ENCODE measurements at regions of chr4 and their contacts with region 1.

Region 1: DNA sequence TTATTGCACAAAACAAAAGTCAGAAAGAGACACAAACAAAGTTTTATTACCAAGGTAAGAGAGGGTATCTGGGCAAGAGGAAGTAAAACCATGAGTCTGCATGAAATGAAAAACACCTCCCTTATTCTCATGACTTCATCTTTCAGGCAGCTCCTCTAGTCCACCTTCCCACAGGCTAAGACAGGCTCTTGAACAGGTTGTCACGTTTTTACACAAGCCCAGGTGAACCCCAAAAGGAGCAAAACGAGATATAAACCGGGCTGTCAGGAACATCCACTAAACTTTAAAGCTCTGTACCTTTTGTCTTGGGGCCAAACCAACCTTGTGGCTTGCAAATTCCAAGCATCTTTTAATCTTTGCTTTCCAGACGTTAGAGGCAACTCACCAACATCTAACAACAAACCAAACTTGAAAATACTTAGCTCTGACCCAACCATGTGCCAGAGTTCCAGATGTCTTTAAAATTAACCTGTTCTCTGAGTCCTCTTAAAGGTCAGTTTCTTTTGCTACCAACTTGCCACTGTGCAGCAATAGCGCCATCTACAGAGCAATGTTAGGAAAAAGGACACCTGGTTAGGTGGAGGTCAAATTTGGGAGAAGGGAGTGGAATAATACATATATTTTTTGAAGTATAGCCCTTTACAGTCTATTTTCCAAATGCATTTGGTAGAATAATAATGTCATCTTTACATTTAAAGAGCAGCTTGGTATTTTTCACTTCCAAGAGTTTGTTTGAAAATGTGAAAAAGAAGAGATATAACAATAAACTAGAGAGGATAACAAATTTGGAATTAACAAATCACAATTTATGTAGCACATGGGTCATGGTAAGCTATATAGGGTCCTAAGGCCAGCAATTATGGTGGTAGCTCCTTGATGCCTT is 73.1 kb downstream of the QRFPR start:
- DNase-seq: peak in 1 of 2 experiments; percentile 31
- H3K4me3 ChIP-seq: no peak overlapping the region
- H3K27ac ChIP-seq: peak overlapping the region; percentile 15; the same call in 1 of the 2 replicates
- H3K4me1 ChIP-seq: peaks cover 14% of the 10 kb centered on the region; the same call in 1 of the 2 replicates
- H3K27me3 ChIP-seq: no peaks in the 10 kb centered on the region
- CTCF ChIP-seq: peak; percentile 92

Region 2: DNA sequence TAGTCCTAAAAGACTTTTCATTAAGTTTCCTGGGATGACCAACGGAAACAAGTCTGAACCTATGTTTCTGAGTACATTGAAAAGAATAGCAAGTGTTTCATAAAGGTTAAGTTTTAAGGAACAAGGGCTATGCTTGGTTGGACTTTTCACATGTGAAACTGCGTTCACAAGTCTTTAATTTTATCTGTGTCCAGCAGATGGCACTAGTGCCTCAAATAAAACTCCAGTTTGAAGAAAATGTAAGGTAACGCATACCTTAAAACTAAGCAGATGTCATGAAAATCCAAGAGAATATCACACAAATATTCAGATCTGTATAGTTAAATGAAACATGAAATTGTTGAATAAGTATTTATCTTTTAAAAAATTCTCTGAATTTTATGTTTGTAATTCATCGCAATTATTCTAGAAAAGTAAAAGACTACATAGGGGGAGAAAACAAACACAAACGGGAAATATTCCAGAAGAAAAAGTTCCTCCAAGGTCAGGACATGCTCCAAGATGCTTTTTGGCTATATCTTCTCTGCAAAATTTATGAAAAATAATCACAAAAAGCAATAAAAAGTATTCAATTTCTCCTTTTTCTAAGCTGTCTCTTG is 1151.5 kb before region 1 on chr4:
- CTCF ChIA-PET with region 1: no interaction called
- POLR2A ChIA-PET with region 1: no interaction called
- intact Hi-C with region 1: loop called (anchors 5 kb)
- DNase-seq: peak; percentile 12 to 41
- H3K4me3 ChIP-seq: no peak overlapping the region
- H3K27ac ChIP-seq: no peak overlapping the region
- H3K4me1 ChIP-seq: no peaks in the 10 kb centered on the region
- H3K27me3 ChIP-seq: no peaks in the 10 kb centered on the region
- CTCF ChIP-seq: peak; percentile 87

Region 3: GRCh38 chr4:121252224-121252806 is 55.4 kb before region 1 on chr4:
- CTCF ChIA-PET with region 1: no interaction called
- POLR2A ChIA-PET with region 1: no interaction called
- intact Hi-C with region 1: loop called (anchors 1 kb)
- DNase-seq: peak; percentile 48 to 51
- H3K4me3 ChIP-seq: no peak overlapping the region
- H3K27ac ChIP-seq: no peak overlapping the region
- H3K4me1 ChIP-seq: peaks cover 12% of the 10 kb centered on the region
- H3K27me3 ChIP-seq: no peaks in the 10 kb centered on the region
- CTCF ChIP-seq: peak; percentile 92

Region 4: DNA sequence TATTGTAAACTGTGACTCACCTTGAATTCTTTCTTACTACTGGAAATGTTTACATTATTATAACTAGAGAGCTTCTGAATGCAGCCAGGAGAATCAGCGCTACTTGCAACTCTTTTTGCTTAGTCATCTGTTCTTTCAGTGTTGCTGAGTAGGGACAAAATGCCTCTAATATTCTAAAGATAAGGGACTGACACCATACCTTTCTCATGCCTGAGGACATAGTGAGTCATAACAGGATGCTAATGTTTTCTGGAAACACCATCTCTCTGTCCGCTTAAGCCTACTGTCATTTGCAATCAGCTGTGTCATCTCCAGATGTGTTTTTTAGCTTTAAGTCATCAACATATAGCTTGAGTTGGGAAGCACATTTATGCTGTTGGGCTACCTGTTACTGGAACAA is 35.2 kb before region 1 on chr4:
- CTCF ChIA-PET with region 1: interaction called, 3 read pairs
- POLR2A ChIA-PET with region 1: no interaction called
- intact Hi-C with region 1: loop called (anchors 2 kb)
- DNase-seq: peak; percentile 20 to 84
- H3K4me3 ChIP-seq: no peak overlapping the region
- H3K27ac ChIP-seq: peak overlapping the region; percentile 29
- H3K4me1 ChIP-seq: peaks cover 15% of the 10 kb centered on the region
- H3K27me3 ChIP-seq: no peaks in the 10 kb centered on the region
- CTCF ChIP-seq: no peak

Region 5: DNA sequence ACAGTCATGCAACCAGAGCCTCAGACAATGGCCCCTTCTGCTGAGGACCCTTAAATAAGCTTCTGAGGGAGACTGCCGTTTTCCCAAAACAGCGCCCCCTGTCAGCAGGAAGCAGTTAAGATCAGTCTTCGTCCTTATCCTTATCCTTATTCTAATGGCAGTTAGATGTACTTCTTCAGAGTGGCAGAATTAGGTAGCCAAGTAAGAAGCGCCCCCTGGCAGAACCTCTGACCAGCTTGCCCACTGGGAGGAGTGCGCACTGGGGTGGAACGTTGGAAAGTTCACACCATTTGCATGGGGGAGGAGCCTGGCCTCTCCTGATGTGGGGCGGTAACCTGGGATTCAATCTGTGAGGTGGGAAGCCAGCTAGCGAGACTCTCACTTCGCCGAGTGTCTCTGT is 206.8 kb after region 1 on chr4:
- CTCF ChIA-PET with region 1: no interaction called
- POLR2A ChIA-PET with region 1: no interaction called
- intact Hi-C with region 1: no loop called
- DNase-seq: no peak
- H3K4me3 ChIP-seq: no peak overlapping the region
- H3K27ac ChIP-seq: no peak overlapping the region
- H3K4me1 ChIP-seq: no peaks in the 10 kb centered on the region
- H3K27me3 ChIP-seq: no peaks in the 10 kb centered on the region
- CTCF ChIP-seq: peak; percentile 37; the same call in 1 of the 2 replicates